HEK293 (cell line): ENCODE measurements at regions of chr12 and their contacts with region 1.

Region 1: GRCh38 chr12:56468216-56469006 is at the start of gene SPRYD4:
- H3K4me3 ChIP-seq: peak within 1 kb of the TSS; percentile 88
- H3K27ac ChIP-seq: peak within 1 kb of the TSS; percentile 38; the same call in 1 of the 2 replicates
- H3K4me1 ChIP-seq: no peaks in the 10 kb centered on the region
- CTCF ChIP-seq: peak; percentile 94

Region 2: DNA sequence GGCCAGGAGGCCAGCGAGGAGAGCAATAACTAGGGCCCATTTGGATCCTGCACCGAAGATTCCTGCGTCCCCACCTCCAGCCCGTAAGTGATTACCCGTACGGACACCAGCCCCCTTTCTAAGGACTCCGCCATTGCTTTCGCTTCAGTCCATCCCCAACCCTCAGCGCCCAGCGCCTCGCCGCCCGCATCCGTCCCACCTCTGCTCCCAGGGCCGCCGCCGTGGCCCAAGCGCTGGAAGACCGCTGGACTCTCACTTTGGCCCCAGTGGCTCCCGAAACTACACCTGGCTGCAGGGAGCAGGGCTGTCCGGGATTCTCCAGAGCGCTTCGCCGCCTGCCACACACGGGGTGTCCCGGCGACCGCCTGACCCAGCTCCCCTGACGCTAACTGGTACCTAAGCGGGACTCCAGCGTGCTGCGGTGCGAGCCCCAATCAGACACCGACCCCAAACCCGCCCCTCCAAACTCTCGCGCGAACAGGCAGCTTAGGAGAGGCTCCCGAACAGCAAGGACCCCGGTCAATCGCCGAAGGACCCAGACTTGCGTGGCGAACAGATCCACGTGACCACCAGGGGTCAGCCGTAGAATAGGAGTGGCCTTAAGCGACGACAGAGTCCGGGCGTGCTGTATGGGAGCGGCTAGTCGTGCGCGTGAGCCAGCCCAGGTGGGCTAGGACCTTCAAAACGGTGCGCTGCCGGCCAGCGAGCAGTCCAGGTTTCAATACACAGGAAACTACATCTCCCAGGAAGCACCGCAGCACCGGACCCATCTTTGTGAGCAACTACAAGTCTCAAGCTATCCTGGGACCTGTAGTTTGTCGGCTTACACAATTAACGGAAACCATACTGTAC is 152.6 kb before region 1 on chr12 and contains the start of gene CNPY2:
- CTCF ChIA-PET with region 1: interaction called, 22 read pairs
- POLR2A ChIA-PET with region 1: interaction called, 10 read pairs
- H3K4me3 ChIP-seq: peak within 1 kb of the TSS; percentile 91
- H3K27ac ChIP-seq: peak within 1 kb of the TSS; percentile 76
- H3K4me1 ChIP-seq: no peaks in the 10 kb centered on the region; the same call in 1 of the 2 replicates
- CTCF ChIP-seq: peak; percentile 91

Region 3: GRCh38 chr12:56377310-56377988 is 91.0 kb before region 1 on chr12:
- CTCF ChIA-PET with region 1: interaction called, 10 read pairs
- POLR2A ChIA-PET with region 1: interaction called, 6 read pairs
- H3K4me3 ChIP-seq: no peak overlapping the region
- H3K27ac ChIP-seq: no peak overlapping the region
- H3K4me1 ChIP-seq: no peaks in the 10 kb centered on the region
- CTCF ChIP-seq: no peak

Region 4: DNA sequence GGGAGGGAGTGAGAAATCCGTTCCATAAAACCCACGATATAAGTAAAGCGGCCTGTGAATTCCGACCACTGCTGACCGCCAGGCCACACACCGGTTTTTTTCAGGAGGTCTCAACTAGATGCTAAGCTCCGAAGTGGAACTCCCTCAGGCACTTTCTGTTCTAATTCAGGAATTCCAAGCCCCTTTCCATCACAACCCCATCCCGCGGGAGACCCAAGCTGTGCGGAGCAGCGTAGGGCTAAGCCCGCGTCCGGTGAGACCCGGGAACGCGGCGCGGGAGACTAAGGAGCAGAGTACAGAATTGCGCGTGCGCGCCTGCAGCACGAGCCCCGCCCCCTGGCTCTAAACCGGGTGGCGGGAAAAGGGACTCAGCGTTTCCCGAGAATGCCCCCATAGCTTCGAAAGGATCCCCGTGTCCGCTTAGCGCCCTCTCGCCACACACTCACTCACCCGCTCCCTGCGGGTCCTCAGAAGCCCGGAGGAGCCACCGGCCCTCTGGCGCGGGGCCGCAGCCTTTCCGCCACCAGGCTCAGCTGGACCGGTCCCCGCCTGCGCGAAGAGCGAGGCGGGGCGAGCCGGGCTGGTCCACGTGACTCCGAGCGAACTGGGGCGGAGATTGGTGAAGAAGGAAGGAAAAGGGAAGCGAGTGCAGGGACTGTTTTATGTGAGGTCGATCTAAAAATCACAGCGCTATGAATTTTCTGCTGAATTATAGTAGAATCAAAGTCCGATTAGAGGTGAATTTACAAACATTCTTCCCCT is 19.4 kb before region 1 on chr12 and contains the start of gene TIMELESS:
- CTCF ChIA-PET with region 1: interaction called, 29 read pairs
- POLR2A ChIA-PET with region 1: interaction called, 12 read pairs
- H3K4me3 ChIP-seq: peak within 1 kb of the TSS; percentile 59
- H3K27ac ChIP-seq: peak within 1 kb of the TSS; percentile 93
- H3K4me1 ChIP-seq: peaks cover 5% of the 10 kb centered on the region
- CTCF ChIP-seq: peak; percentile 48; the same call in 1 of the 2 replicates

Region 5: DNA sequence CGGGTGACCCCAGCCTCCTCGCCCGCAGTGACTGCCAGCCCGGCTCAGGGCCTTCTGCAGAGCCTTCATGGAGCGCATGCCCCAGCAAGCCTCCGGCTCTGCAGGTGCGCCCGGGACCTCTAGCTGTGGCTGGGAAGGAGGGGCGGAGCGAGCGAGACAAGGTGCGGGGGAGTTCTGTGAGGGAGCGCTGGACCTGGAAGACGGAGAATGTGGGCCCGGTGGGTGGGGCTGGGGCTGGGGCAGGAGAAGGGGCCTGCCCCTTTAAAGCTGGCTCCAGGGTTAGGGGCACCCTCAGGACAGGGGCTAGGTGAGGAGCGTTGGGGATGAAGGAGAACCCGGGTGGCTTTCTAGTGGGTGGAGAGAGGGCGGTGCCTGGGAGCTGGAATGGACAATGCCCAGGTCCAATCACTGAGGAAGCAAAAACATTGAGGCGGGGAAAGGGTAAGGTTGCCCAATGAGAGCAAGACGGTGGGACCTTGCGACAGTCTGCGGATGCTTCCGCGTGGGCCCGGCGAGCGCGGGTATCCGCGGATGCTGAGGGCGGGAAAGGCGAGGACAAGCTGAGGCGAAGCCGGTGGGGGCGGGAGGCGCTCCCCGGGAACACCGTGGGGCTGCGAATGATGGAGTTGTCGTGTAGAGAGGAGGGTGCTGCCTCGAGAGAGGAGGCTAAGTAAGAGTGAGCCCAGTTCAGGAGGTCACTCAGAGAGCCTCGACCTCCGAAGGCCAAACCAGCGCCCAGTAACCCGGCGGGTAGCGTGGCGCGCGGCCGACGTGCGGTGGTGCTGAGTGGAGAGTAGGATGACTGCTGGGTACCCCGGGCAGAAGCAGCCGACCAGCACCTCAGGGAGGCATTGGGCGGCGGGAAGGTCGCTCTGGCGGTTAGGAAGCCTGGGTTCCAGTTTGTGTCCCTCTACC is 19.9 kb after region 1 on chr12 and contains the start of gene GLS2:
- CTCF ChIA-PET with region 1: interaction called, 16 read pairs
- POLR2A ChIA-PET with region 1: interaction called, 7 read pairs
- H3K4me3 ChIP-seq: peak within 1 kb of the TSS; percentile 56
- H3K27ac ChIP-seq: peak within 1 kb of the TSS; percentile 60; the same call in 1 of the 2 replicates
- H3K4me1 ChIP-seq: no peaks in the 10 kb centered on the region
- CTCF ChIP-seq: no peak

Region 6: DNA sequence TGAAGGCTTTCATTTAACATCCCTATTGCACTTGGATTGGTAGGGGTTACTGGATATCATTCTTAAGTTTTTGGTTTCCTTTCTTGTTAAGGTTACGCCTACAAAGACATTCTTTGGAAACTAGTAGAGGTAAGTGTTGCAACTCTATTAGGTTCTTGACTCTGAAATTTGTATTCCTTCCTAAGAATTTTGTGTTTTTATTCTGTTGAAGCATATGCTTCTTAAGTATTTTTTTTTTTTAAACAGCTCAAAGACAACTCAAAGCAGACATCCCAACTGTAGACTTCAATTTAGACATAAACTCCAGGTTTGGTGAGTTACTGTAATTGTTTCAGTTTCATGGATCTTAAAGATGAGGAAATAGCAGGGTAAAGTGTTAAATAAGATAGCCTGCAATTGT is 52.1 kb after region 1 on chr12:
- CTCF ChIA-PET with region 1: no interaction called
- POLR2A ChIA-PET with region 1: no interaction called
- H3K4me3 ChIP-seq: no peak overlapping the region
- H3K27ac ChIP-seq: no peak overlapping the region
- H3K4me1 ChIP-seq: no peaks in the 10 kb centered on the region
- CTCF ChIP-seq: no peak

Region 7: DNA sequence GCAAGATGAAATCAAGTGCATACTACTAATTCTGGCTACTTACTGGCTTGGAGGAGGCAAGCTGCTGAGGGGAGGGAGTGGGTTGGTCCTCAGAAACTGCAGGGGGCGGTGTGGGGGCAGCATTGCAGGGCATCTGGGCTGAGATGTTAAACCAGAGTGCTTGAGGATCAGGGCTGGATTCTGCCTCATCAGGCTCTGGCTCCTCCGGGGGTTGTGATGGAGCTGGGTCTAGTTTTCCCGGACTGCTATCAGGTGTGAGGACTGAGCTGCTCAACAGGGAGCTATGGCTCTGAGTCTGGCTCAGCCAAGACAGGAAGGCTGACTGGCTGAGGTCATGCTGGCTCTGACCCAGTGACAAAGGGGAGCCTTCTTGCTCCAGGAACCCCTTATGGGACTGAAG is 133.1 kb after region 1 on chr12:
- CTCF ChIA-PET with region 1: no interaction called
- POLR2A ChIA-PET with region 1: no interaction called
- H3K4me3 ChIP-seq: no peak overlapping the region
- H3K27ac ChIP-seq: no peak overlapping the region
- H3K4me1 ChIP-seq: no peaks in the 10 kb centered on the region
- CTCF ChIP-seq: 0 out of 2 replicates have a peak, but pooled peaks have one; percentile 21

Region 8: GRCh38 chr12:56622535-56622934 is 154.1 kb after region 1 on chr12:
- CTCF ChIA-PET with region 1: no interaction called
- POLR2A ChIA-PET with region 1: no interaction called
- H3K4me3 ChIP-seq: no peak overlapping the region
- H3K27ac ChIP-seq: no peak overlapping the region
- H3K4me1 ChIP-seq: peaks cover 7% of the 10 kb centered on the region
- CTCF ChIP-seq: no peak